ENCODE measurements at regions of chr14 and their contacts with region 1.

Region 1: DNA sequence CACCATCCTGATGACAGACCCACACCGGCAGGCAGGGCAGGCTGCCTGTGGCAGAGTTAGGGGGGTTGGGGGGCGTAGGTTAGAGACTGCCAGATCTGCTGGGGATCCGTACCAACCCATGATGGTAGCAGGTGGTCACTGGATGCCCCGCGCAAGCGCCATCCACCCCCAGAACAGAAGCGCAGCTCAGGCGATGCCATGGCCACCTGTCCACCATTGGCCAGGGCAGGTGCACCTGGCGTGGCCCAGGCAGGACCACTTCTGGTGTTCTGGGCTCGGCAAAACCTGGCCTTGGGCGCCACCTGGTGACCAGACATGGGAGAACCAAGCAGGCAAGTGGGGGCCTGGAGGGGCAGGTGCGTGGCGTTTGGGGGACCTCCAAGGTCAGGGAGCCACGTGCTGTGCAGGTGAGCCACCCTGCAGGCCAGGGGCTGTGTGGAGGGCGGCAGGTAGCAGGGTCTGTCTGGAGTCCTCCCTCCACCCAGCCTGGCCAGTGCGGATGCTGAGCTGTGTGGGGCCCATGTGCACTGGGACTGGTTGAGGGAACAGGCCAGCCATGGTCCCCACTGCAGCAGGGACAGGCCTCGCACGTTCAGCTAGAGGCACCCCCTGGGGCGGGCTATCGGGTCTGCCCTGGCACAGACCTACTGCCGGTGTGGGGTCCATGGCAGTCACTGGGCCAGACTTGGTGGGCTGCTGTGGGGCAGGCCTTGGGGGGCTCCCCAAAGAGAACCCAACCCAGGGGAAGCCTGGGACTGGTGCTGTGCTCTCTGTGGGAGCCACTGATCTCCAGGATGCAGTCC is 15.6 kb downstream of the BAG5 start:
- DNase-seq: peak; percentile 57 to 72 (median 68)
- H3K4me3 ChIP-seq: no peak overlapping the region
- H3K27ac ChIP-seq: no peak overlapping the region
- H3K4me1 ChIP-seq: peaks cover 0 to 5% (median 0%) of the 10 kb centered on the region in 4 experiments
- H3K27me3 ChIP-seq: peaks cover 0 to 6% (median 0%) of the 10 kb centered on the region in 5 experiments

Region 2: DNA sequence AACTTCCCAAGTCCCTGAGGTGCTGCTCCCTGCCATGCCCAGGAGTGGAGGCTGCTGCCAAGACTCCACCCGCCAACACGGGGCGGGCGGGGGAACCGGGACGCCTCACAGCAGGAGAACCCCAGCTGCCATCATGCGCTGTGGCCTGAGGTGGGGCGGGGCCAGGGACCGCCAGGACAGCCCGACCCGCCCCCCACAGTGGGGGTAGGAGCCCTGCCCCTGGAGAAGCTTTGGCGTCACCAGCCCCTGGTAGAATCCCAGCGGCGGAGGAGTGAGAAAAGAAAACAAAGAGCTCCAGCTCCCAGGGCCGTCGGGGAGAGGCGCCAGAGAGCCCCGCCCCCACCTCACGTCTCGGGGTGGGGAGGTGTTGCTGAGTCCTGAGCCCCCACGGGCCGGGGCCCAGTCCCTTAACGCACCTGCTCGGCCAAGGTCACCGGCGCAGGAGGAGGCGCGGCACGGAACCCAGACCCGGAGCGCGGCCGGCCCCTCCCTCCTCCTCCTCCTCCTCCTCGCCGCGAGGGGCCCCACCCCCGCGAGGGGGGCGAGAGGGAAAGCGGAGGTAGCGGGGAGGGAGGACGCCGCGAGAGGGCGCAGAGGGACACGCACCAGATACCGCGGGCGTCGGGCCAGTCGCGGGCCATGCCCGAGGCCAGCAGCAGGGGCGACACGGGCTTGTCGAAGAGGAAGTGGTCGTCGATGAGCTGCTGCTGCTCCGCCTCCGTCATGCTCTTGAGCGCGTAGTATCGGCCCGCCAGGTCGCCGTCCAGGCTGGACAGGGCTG is 26.0 kb before region 1 on chr14:
- CTCF ChIA-PET with region 1: interaction called, 147 read pairs
- POLR2A ChIA-PET with region 1: no interaction called
- DNase-seq: peak; percentile 91 to 94 (median 92)
- H3K4me3 ChIP-seq: peak overlapping the region; percentile 38 to 74 (median 64)
- H3K27ac ChIP-seq: no peak overlapping the region
- H3K4me1 ChIP-seq: peaks cover 0 to 57% (median 52%) of the 10 kb centered on the region in 4 experiments
- H3K27me3 ChIP-seq: peaks cover 0 to 30% (median 6%) of the 10 kb centered on the region in 5 experiments

Region 3: DNA sequence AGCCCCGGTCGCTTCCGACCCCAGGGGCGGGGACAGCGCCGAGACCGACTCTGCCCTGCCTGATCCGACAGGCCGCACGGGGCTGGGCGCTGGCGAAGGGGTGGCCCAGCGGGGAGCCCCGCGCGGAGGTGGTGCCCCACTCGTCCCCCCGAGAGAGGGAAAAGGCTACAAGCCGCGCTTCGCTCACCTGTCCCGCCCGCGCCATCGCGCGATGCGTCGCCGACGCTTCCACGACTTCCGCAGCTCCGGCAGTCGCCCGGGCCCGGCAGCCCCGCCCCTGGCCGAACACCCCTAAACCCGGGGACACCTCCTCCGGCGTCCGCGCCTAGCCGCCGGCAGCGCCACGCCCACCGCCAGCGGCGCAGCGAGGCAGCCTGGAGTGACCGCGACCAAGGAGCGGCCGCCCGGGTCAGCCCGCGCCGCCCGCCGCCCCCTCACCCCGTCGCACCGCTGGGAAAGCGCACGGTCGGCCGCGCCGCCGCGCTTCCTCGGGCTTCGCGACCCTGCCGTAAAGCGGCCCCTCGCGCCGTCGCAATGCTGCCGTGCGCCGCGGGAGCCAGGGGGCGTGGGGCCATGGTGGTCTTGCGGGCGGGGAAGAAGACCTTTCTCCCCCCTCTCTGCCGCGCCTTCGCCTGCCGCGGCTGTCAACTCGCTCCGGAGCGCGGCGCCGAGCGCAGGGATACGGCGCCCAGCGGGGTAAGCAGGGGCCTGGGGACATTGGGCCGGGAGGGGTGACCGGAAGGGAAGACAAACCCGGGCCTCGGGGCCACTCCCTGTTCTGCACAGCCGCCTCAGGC is 15.8 kb after region 1 on chr14 and contains the starts of genes BAG5 and COA8:
- CTCF ChIA-PET with region 1: interaction called, 30 read pairs
- POLR2A ChIA-PET with region 1: no interaction called
- DNase-seq: peak; percentile 88 to 95 (median 93)
- H3K4me3 ChIP-seq: peak within 1 kb of the TSS; percentile 66 to 99 (median 94)
- H3K27ac ChIP-seq: peak within 1 kb of the TSS; percentile 78 to 93
- H3K4me1 ChIP-seq: peaks cover 11 to 30% (median 25%) of the 10 kb centered on the region in 4 experiments
- H3K27me3 ChIP-seq: no peaks in the 10 kb centered on the region

Measured in common myeloid progenitor, CD34-positive (primary cell).